Common myeloid progenitor, CD34-positive (primary cell): ENCODE measurements at regions of chr12 and their contacts with region 1.

Region 1: DNA sequence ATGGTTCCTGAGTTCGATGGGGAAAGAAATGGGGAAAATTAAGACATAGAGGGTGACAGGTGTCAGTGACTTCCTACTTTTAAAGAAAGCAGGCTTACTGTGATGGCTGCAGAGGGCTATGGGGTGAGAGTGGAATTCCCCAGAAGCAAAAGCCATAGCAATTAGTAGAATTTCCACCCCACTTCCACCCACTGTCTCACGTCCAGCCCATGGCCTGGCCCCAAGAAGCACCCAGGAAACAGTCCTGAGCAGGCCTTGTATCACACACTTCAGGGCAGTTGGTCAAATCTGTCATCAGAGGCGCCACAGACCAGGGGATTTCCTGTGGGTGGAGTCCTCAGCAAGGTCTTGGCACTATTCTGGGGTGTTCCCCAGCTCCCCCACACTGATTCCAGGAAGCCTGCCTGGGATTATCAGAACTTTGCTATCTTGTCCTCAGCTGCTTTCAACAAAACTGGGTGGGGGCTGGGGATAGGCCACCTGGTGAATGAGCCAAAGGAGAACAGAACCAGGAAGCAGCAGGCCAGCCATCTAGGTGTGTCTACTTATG is 120.1 kb upstream of the CCND2 start:
- DNase-seq: peak in 2 of 3 donors; percentile 46 to 55
- H3K4me3 ChIP-seq: no peak overlapping the region
- H3K27ac ChIP-seq: peak overlapping the region in 1 of 2 experiments; percentile 34
- H3K4me1 ChIP-seq: peaks cover 8 to 62% (median 24%) of the 10 kb centered on the region in 4 experiments
- H3K27me3 ChIP-seq: no peaks in the 10 kb centered on the region

Region 2: DNA sequence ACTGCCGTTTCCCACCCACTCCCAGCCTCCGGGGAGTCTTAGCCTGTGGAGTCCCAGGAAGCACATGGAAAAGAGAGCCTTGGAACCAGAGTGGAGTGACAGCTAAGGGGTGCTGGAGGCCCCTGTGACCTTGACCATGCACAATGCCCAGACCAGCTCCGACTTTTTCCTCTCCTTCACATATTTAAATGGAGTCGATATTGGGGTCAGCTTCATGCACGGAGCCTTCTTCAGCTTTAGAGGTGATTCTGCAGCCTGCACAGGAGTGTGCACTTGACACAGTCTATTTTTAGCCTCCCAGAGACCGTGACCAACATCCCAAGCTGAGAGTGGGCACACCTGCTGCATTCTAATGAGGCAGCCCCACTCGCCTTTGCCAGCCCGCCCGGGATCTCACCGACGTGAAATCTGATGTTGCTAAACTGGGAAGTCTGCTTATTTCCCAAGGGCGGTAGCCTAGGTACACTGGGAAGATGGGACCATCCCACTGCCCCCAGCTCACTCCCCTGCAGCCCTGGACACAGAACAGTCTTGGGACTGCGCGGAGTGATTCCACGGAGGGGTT is 614.9 kb before region 1 on chr12:
- CTCF ChIA-PET with region 1: no interaction called
- POLR2A ChIA-PET with region 1: no interaction called
- DNase-seq: no peak
- H3K4me3 ChIP-seq: no peak overlapping the region
- H3K27ac ChIP-seq: no peak overlapping the region
- H3K4me1 ChIP-seq: no peaks in the 10 kb centered on the region
- H3K27me3 ChIP-seq: peaks cover 0 to 19% (median 2%) of the 10 kb centered on the region in 5 experiments

Region 3: DNA sequence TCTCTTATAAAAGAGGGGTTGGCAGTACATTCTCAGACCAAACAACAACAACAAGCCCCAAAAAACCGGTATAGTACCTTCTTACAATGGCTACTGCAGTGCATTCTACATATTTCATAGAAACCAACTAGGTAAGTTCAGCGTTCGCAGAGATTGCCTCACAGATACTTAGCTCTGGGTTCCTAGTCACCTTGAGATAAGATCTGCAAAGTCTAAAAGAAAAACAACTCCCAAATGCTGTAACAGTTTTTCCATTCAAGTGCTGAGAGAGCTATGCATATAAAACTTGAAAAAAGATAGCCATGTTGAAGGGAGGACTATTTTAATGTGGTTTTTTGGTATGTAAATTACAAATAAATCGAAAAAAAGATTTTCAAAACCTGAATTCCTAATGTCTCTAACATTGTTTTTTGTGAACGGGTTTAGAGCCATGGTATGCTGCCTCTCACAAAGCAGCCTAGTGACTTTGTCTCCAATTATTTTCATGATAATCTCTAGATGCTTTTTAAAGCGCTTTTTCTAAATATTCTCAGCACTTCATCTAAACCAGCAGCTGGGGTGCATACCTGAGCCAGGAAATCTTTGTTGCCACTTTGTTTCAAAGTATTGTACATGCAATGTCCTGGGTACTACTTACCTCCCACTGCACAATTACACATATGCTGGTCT is 343.9 kb before region 1 on chr12:
- CTCF ChIA-PET with region 1: no interaction called
- POLR2A ChIA-PET with region 1: no interaction called
- DNase-seq: no peak
- H3K4me3 ChIP-seq: no peak overlapping the region
- H3K27ac ChIP-seq: no peak overlapping the region
- H3K4me1 ChIP-seq: no peaks in the 10 kb centered on the region
- H3K27me3 ChIP-seq: no peaks in the 10 kb centered on the region

Region 4: GRCh38 chr12:4164559-4165558 is 11.4 kb after region 1 on chr12:
- CTCF ChIA-PET with region 1: interaction called, 17 read pairs
- POLR2A ChIA-PET with region 1: interaction called, 3 read pairs
- DNase-seq: peak; percentile 67 to 82 (median 73)
- H3K4me3 ChIP-seq: peak overlapping the region; percentile 17 to 73 (median 53)
- H3K27ac ChIP-seq: peak overlapping the region; percentile 46 to 75
- H3K4me1 ChIP-seq: peaks cover 8 to 16% (median 14%) of the 10 kb centered on the region in 4 experiments
- H3K27me3 ChIP-seq: no peaks in the 10 kb centered on the region

Region 5: GRCh38 chr12:4197922-4198763 is 44.7 kb after region 1 on chr12:
- CTCF ChIA-PET with region 1: no interaction called
- POLR2A ChIA-PET with region 1: no interaction called
- DNase-seq: no peak
- H3K4me3 ChIP-seq: no peak overlapping the region
- H3K27ac ChIP-seq: no peak overlapping the region
- H3K4me1 ChIP-seq: peaks cover 0 to 6% (median 2%) of the 10 kb centered on the region in 4 experiments
- H3K27me3 ChIP-seq: no peaks in the 10 kb centered on the region

Region 6: GRCh38 chr12:4303750-4304149 is 150.3 kb after region 1 on chr12:
- CTCF ChIA-PET with region 1: no interaction called
- POLR2A ChIA-PET with region 1: no interaction called
- DNase-seq: no peak
- H3K4me3 ChIP-seq: no peak overlapping the region
- H3K27ac ChIP-seq: no peak overlapping the region
- H3K4me1 ChIP-seq: peaks cover 0 to 2% (median 0%) of the 10 kb centered on the region in 4 experiments
- H3K27me3 ChIP-seq: no peaks in the 10 kb centered on the region